Mammary epithelial cell (primary cell): ENCODE measurements at regions of chr4 and their contacts with region 1.

Region 1: GRCh38 chr4:6308899-6309643 is 39.4 kb downstream of the WFS1 start:
- DNase-seq: no peak
- H3K4me3 ChIP-seq: peak overlapping the region in 1 of 3 experiments; percentile 23
- H3K27ac ChIP-seq: no peak overlapping the region
- H3K4me1 ChIP-seq: no peaks in the 10 kb centered on the region
- H3K27me3 ChIP-seq: peaks cover 17% of the 10 kb centered on the region
- CTCF ChIP-seq: peak in 1 of 2 donors; percentile 12

Region 2: DNA sequence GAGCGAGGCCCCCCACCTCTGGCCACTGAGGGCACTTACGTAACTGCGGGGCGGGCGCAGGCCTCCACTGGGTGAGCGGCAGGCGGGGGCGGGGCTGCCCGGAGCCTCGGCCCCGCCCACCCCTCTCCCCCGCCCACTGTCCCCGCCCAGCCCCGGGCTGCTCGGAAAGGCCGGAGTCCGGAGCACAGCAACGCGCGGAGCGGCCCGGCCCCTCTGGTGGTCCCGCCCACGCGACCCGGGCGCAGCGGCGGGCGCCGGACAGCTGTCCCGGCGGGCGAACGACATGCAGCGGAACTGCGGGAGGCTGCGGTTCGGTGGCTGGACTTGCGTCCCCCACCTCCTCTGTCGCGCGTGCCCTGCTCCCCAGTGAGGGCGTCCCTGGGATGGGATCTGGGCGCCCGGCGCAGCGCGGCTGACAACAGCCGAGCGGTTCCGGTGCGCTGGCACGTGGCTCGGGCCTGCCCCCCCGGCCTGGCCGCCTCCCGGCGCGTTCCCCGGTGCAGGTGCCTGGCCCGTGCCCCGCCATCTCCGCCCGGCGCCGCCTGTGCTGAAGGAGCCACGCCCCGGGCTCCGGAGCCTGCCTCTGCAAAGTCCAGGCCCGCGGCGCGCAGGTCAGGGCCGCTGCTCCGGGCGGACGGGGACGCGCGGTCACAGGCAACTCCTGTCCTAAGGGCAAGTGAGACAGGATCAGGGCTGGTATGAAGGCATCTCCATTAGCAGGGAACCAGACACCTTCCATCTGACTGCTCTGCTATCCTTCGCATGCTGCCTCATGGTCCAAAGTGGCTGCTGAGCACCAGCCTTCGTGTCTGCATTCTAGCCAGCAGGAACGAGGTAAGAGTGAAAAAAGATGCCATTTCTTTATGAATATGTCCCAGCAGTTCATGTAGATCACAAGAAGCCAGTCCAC is 87.0 kb before region 1 on chr4:
- CTCF ChIA-PET with region 1: no interaction called
- dilution Hi-C with region 1: loop called (anchors 5 kb)
- in situ Hi-C with region 1: no loop called
- intact Hi-C with region 1: no loop called
- DNase-seq: peak; percentile 5
- H3K4me3 ChIP-seq: no peak overlapping the region
- H3K27ac ChIP-seq: no peak overlapping the region
- H3K4me1 ChIP-seq: no peaks in the 10 kb centered on the region
- H3K27me3 ChIP-seq: no peaks in the 10 kb centered on the region
- CTCF ChIP-seq: no peak

Region 3: GRCh38 chr4:6379767-6380745 is 71.0 kb after region 1 on chr4:
- CTCF ChIA-PET with region 1: no interaction called
- dilution Hi-C with region 1: loop called (anchors 5 kb)
- in situ Hi-C with region 1: no loop called
- intact Hi-C with region 1: no loop called
- DNase-seq: no peak
- H3K4me3 ChIP-seq: no peak overlapping the region
- H3K27ac ChIP-seq: no peak overlapping the region
- H3K4me1 ChIP-seq: peaks cover 8% of the 10 kb centered on the region
- H3K27me3 ChIP-seq: no peaks in the 10 kb centered on the region
- CTCF ChIP-seq: no peak

Region 4: DNA sequence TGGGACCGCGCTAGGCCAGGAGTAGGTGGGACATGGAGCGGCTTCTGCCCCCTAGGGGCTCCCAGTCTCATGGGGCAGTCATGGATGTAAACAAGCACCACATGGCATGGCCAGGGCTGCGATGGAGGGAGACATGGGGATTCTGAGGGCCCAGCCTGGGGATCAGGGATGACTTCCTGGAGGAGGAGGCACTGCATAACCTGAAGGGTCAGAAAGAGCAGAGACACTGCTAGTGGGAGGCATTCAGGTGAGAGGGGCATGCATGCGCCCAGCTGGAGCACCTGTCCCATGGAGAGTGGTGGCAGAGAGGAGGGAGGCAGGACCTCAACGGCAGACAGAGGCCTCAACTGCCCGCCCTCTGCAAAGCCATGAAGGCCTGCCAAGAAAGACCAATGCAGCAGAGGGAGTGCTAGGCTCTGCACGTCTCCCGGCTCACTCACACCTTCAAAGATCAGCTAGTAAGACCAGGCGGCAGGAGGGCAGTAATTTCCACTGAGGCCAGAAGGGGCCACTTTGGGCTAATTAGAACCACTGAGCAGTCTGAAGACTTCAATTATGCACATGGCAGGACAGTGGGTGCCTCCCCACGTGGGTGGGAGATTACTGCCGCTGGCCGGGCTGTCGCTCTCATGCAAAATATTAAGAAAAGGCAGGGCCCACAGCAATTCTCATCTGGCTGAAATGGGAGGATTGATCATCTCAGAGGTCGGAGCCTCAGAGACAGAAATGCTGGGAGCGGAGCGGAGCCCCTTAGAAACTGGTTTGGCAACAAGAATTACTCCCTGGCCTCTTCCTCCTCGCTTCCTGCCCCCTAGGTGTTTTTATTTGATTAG is 93.7 kb after region 1 on chr4:
- CTCF ChIA-PET with region 1: no interaction called
- dilution Hi-C with region 1: no loop called
- in situ Hi-C with region 1: no loop called
- intact Hi-C with region 1: no loop called
- DNase-seq: no peak
- H3K4me3 ChIP-seq: no peak overlapping the region
- H3K27ac ChIP-seq: no peak overlapping the region
- H3K4me1 ChIP-seq: no peaks in the 10 kb centered on the region
- H3K27me3 ChIP-seq: no peaks in the 10 kb centered on the region
- CTCF ChIP-seq: no peak